GM12878 (cell line): ENCODE measurements at regions of chr13 and their contacts with region 1.

Region 1: GRCh38 chr13:77415253-77416071 is 88.6 kb upstream of the MYCBP2 start:
- DNase-seq: peak; percentile 45
- ATAC-seq: peak; percentile 93
- H3K4me3 ChIP-seq: no peak overlapping the region
- H3K27ac ChIP-seq: peak overlapping the region; percentile 26; the same call in 1 of the 2 replicates
- H3K4me1 ChIP-seq: peaks cover 10% of the 10 kb centered on the region
- H3K27me3 ChIP-seq: no peaks in the 10 kb centered on the region
- CTCF ChIP-seq: no peak
- EP300 ChIP-seq: no peak
- POLR2A ChIP-seq: 0 out of 2 replicates have a peak, but pooled peaks have one; percentile 32
- RAD21 ChIP-seq: 0 out of 2 replicates have a peak, but pooled peaks have one; percentile 17

Region 2: GRCh38 chr13:77389625-77390000 is 25.8 kb before region 1 on chr13:
- CTCF ChIA-PET with region 1: interaction called, 4 read pairs
- POLR2A ChIA-PET with region 1: interaction called, 3 read pairs
- RAD21 ChIA-PET with region 1: interaction called, 5 read pairs
- SMC1A ChIA-PET with region 1: interaction called, 10 read pairs
- in situ Hi-C with region 1: no loop called
- intact Hi-C with region 1: no loop called
- DNase-seq: peak; percentile 23
- ATAC-seq: peak; percentile 89
- H3K4me3 ChIP-seq: no peak overlapping the region
- H3K27ac ChIP-seq: no peak overlapping the region
- H3K4me1 ChIP-seq: peaks cover 9% of the 10 kb centered on the region; the same call in 1 of the 2 replicates
- H3K27me3 ChIP-seq: no peaks in the 10 kb centered on the region
- CTCF ChIP-seq: no peak
- EP300 ChIP-seq: peak; percentile 55 to 87; a peak in 3 of 4 replicates
- POLR2A ChIP-seq: no peak
- RAD21 ChIP-seq: no peak